H1 (cell line): ENCODE measurements at regions of chr19 and their contacts with region 1.

Region 1: DNA sequence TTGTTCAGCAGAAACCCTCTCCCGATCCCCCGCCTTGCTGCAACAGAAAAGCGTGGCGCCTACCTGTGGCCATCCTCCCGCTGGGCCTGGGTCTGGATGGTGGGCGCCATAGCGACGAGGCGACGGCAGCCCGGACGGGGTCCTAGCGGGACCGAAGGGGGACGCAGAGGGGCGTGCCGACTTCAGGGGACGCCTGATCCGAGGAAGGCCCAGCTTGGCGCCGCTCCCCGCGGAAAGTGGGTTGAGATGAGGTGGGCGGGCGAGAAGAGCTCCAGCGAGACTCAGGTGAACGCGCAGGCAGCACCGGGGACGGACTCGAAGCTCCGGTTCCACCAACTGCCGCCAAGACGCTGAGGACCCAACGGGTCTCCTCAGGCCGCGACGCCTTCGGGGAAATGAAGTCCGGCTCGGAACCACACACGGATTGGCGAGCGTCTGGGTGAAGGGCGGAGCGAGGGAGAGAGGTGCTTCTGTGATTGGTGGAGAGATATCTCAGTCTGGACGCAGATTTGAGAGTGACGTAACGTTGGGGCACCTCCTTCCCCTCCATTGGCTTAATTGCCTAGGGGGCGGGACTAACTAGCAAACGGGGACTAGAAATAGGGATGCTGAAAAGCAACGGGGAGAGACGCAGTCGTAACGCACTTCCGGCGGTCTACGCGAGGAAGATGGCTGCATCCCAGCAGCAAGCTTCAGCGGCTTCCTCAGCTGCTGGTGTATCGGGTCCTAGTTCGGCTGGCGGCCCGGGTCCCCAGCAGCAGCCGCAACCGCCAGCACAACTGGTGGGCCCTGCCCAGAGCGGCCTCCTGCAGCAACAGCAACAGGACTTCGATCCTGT is at the starts of genes MED29 and PAF1:
- DNase-seq: peak; percentile 91 to 99
- H3K4me3 ChIP-seq: peak within 1 kb of the TSS; percentile 91 to 97 (median 96)
- H3K27ac ChIP-seq: peak within 1 kb of the TSS; percentile 99
- H3K4me1 ChIP-seq: peaks cover 2 to 10% (median 7%) of the 10 kb centered on the region in 4 experiments
- H3K27me3 ChIP-seq: no peaks in the 10 kb centered on the region
- CTCF ChIP-seq: peak in 1 of 3 experiments; percentile 22; a peak in 2 of 4 replicates
- EP300 ChIP-seq: peak in 1 of 2 experiments; percentile 29; a peak in 1 of 3 replicates
- POLR2A ChIP-seq: peak; percentile 93 to 98
- RAD21 ChIP-seq: no peak
- total RNA-seq, gene MED29: 31.1 and 32.3 TPM in 2 replicates
- total RNA-seq, gene PAF1: 31.4 and 33.1 TPM in 2 replicates

Region 2: GRCh38 chr19:39310558-39311311 is 80.2 kb before region 1 on chr19:
- CTCF ChIA-PET with region 1: no interaction called
- POLR2A ChIA-PET with region 1: no interaction called
- DNase-seq: no peak
- H3K4me3 ChIP-seq: peak overlapping the region in 1 of 4 experiments; percentile 17; a peak in 1 of 8 replicates
- H3K27ac ChIP-seq: no peak overlapping the region
- H3K4me1 ChIP-seq: peaks cover 0 to 6% (median under 1%) of the 10 kb centered on the region in 4 experiments; a peak in 4 of 7 replicates
- H3K27me3 ChIP-seq: peaks cover 0 to 23% (median 9%) of the 10 kb centered on the region in 4 experiments; a peak in 3 of 7 replicates
- CTCF ChIP-seq: no peak
- EP300 ChIP-seq: no peak
- POLR2A ChIP-seq: no peak
- RAD21 ChIP-seq: no peak

Region 3: GRCh38 chr19:39352381-39353255 is 38.4 kb before region 1 on chr19:
- CTCF ChIA-PET with region 1: interaction called, 3 read pairs
- POLR2A ChIA-PET with region 1: interaction called, 18 read pairs
- DNase-seq: no peak
- H3K4me3 ChIP-seq: no peak overlapping the region
- H3K27ac ChIP-seq: no peak overlapping the region
- H3K4me1 ChIP-seq: no peaks in the 10 kb centered on the region
- H3K27me3 ChIP-seq: no peaks in the 10 kb centered on the region
- CTCF ChIP-seq: no peak
- EP300 ChIP-seq: no peak
- POLR2A ChIP-seq: no peak
- RAD21 ChIP-seq: no peak

Region 4: GRCh38 chr19:39363901-39364457 is 27.0 kb before region 1 on chr19:
- CTCF ChIA-PET with region 1: no interaction called
- POLR2A ChIA-PET with region 1: interaction called, 25 read pairs
- DNase-seq: no peak
- H3K4me3 ChIP-seq: no peak overlapping the region
- H3K27ac ChIP-seq: no peak overlapping the region
- H3K4me1 ChIP-seq: no peaks in the 10 kb centered on the region
- H3K27me3 ChIP-seq: no peaks in the 10 kb centered on the region
- CTCF ChIP-seq: no peak
- EP300 ChIP-seq: no peak
- POLR2A ChIP-seq: no peak
- RAD21 ChIP-seq: no peak

Region 5: DNA sequence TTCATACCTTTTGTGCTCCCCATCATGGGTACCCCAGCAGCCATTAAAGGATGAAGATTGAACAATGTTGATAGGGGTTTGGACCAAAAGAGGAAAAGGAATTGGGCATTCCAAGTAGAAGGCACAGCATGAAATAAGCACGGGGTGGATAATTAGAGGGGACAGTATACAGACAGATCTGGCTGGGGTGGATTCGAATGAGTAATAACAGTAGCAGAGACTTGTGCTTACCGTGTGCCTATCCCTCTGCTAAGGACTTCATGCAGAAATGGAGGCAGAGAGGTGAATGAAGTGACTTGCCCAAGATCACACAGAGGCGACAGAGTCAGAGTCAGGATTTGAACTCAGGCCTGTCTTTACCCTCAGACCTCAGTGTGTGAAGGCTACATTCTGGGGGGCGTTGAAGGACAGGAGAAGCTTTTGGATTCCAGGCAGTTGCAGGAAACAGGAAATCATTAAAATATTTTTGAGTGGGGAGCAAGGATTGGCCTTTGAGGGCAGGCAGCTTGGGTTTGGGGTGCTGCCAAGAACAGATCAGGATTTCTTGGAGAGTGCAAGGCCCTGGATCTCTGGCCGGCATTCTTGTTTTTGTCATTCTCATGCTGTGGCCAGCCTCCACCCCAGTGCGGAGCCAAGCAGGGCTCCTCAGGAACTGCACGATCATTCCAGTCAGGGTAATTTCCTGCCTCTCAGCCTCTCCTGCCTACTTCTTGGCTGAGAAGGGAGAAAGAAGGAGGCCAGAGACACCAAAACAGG is 18.7 kb before region 1 on chr19:
- CTCF ChIA-PET with region 1: no interaction called
- POLR2A ChIA-PET with region 1: interaction called, 11 read pairs
- DNase-seq: no peak
- H3K4me3 ChIP-seq: no peak overlapping the region
- H3K27ac ChIP-seq: no peak overlapping the region
- H3K4me1 ChIP-seq: no peaks in the 10 kb centered on the region
- H3K27me3 ChIP-seq: no peaks in the 10 kb centered on the region
- CTCF ChIP-seq: no peak
- EP300 ChIP-seq: no peak
- POLR2A ChIP-seq: no peak
- RAD21 ChIP-seq: no peak

Region 6: DNA sequence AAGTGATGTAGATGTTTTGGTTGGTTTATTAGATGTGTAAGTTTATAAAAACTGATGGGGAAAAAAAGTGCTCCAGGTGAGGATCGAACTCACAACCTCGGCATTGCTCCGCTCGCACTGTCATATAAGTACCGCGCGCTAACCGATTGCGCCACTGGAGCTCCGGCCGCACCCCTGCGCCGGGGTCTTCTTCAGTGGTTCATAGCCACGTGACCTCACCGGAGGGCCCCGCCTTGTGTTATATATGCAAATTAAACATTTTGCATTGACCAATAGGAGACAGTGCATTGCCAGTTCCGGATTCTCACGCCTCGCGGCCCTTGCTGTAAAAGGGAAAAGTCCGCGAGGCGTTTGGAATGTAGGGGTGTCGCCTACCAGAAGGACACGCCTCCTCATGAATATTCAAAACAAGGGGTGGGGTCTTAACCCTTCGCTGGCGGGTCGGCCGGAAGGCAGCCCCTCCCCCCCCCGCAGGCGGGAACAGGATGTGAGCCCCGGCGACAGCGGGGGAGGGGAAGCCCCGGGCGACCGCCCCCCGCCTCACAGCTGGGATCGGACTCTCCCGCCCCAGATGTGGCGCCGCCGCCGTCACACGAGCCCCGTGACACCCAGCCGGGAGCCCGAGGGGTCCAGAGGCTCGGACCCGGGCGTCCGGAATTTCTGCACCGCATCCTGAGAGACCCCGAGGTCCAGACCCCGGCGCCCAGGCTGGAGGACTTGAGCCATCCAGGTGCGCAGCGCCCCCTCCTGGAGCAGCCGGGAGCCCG is 21.3 kb after region 1 on chr19 and contains the start of gene PLEKHG2:
- CTCF ChIA-PET with region 1: interaction called, 128 read pairs
- POLR2A ChIA-PET with region 1: interaction called, 234 read pairs
- DNase-seq: peak; percentile 99 to 100
- H3K4me3 ChIP-seq: peak within 1 kb of the TSS; percentile 66 to 97 (median 92)
- H3K27ac ChIP-seq: peak within 1 kb of the TSS; percentile 83
- H3K4me1 ChIP-seq: peaks cover 10 to 42% (median 21%) of the 10 kb centered on the region in 4 experiments; a peak in 6 of 7 replicates
- H3K27me3 ChIP-seq: no peaks in the 10 kb centered on the region
- CTCF ChIP-seq: peak; percentile 76 to 85 (median 81)
- EP300 ChIP-seq: no peak
- POLR2A ChIP-seq: peak; percentile 68 to 93
- RAD21 ChIP-seq: peak; percentile 35 to 52; a peak in 3 of 4 replicates
- total RNA-seq, gene PLEKHG2: 64.0 and 65.7 TPM in 2 replicates

Region 7: DNA sequence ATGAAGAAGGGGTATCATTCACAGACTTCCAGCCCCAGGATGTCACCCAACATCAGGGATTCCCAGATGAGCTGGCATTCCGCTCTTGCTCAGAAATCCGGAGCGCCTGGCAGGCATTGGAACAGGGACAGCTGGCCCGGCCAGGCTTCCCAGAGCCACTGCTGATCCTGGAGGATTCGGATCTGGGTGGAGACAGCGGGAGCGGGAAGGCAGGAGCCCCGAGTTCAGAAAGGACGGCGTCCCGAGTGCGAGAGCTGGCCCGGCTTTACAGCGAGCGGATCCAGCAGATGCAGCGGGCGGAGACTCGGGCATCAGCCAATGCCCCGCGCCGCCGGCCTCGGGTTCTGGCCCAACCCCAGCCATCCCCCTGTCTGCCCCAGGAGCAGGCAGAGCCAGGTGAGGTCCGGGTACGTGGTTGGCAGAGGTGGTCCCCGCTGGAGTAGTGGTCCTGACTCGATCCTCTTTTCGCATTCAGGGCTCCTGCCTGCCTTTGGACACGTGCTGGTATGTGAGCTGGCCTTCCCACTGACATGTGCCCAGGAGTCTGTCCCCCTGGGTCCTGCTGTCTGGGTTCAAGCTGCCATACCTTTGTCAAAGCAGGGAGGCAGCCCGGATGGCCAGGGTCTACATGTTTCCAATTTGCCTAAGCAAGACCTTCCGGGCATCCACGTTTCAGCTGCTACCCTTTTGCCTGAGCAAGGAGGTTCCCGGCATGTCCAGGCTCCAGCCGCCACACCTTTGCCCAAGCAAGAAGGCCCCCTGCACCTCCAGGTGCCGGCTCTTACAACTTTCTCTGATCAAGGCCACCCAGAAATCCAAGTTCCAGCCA is 32.5 kb after region 1 on chr19:
- CTCF ChIA-PET with region 1: no interaction called
- POLR2A ChIA-PET with region 1: interaction called, 29 read pairs
- DNase-seq: no peak
- H3K4me3 ChIP-seq: no peak overlapping the region
- H3K27ac ChIP-seq: no peak overlapping the region
- H3K4me1 ChIP-seq: peaks cover 2 to 9% (median 7%) of the 10 kb centered on the region in 4 experiments; a peak in 5 of 7 replicates
- H3K27me3 ChIP-seq: no peaks in the 10 kb centered on the region
- CTCF ChIP-seq: no peak
- EP300 ChIP-seq: no peak
- POLR2A ChIP-seq: no peak; a peak in 1 of 3 replicates
- RAD21 ChIP-seq: no peak

Region 8: DNA sequence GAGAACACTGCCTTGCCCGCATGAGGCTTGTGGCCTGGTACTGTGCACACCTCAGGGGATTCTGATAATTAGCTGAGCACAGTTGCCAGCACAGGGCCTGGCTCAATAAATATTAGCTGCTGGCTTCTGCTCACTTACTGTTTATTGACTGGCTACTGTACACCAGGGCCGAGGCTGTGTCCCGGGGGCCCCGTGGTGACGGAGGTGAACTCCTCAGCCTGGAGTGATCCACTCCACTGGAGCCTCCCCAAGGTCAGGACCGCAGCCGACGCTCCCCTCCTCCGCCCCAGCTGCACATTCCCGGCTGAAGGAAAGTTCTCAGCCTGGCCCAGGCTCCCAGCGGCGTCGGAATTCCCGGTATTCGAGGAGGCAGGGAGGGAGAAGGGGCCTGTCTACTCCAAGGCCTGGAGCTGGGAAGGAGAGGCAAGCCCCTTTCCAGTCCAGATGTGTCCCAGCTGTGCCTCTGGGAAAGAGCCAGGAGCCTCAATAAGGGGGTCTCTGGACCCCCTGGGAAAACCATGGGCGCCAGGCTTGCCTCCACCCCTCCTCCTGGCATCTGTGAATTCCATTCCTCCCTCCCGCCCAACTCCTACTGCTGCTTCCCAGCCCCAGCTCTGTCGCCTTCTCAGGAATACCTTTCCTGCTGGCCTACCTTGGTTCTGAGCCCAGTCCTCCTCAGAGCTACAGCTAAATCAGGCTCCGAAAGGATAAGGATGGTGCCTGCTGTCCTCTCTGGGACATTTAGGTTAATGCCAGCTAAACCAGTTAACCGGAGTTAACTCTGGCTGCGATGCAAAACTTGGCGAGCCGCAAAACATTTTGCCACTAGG is 37.5 kb after region 1 on chr19:
- CTCF ChIA-PET with region 1: no interaction called
- POLR2A ChIA-PET with region 1: interaction called, 182 read pairs
- DNase-seq: peak in 1 of 2 experiments; percentile 88
- H3K4me3 ChIP-seq: peak overlapping the region in 3 of 4 experiments; percentile 18 to 34 (median 32); a peak in 3 of 8 replicates
- H3K27ac ChIP-seq: peak overlapping the region; percentile 86
- H3K4me1 ChIP-seq: peaks cover 5 to 18% (median 13%) of the 10 kb centered on the region in 4 experiments
- H3K27me3 ChIP-seq: no peaks in the 10 kb centered on the region; a peak in 1 of 7 replicates
- CTCF ChIP-seq: no peak
- EP300 ChIP-seq: peak in 1 of 2 experiments; percentile 92; a peak in 1 of 3 replicates
- POLR2A ChIP-seq: peak; percentile 40 to 80; a peak in 2 of 3 replicates
- RAD21 ChIP-seq: peak in 1 of 2 experiments; percentile 3; a peak in 1 of 4 replicates